ENCODE measurements at regions of chr3 and their contacts with region 1.

Region 1: GRCh38 chr3:123028233-123028828 is 768 bp upstream of the SEMA5B start:
- DNase-seq: peak; percentile 57 to 58
- H3K4me3 ChIP-seq: peak overlapping the region; percentile 29 to 47
- H3K27ac ChIP-seq: peak overlapping the region; percentile 36 to 60
- H3K4me1 ChIP-seq: peaks cover 0 to 15% of the 10 kb centered on the region in 2 donors
- H3K27me3 ChIP-seq: peaks cover 0 to 4% of the 10 kb centered on the region in 2 donors
- CTCF ChIP-seq: peak; percentile 51 to 64 (median 60)
- POLR2A ChIP-seq: no peak

Region 2: GRCh38 chr3:122784436-122784835 is 243.9 kb before region 1 on chr3:
- intact Hi-C with region 1: no loop called
- DNase-seq: no peak
- H3K4me3 ChIP-seq: no peak overlapping the region
- H3K27ac ChIP-seq: no peak overlapping the region
- H3K4me1 ChIP-seq: no peaks in the 10 kb centered on the region
- H3K27me3 ChIP-seq: no peaks in the 10 kb centered on the region
- CTCF ChIP-seq: no peak
- POLR2A ChIP-seq: no peak

Region 3: GRCh38 chr3:122942937-122943827 is 85.1 kb before region 1 on chr3:
- intact Hi-C with region 1: loop called (anchors 10 kb)
- DNase-seq: peak; percentile 43 to 49
- H3K4me3 ChIP-seq: no peak overlapping the region
- H3K27ac ChIP-seq: no peak overlapping the region
- H3K4me1 ChIP-seq: no peaks in the 10 kb centered on the region
- H3K27me3 ChIP-seq: no peaks in the 10 kb centered on the region
- CTCF ChIP-seq: peak; percentile 77 to 81 (median 78)
- POLR2A ChIP-seq: no peak

Region 4: DNA sequence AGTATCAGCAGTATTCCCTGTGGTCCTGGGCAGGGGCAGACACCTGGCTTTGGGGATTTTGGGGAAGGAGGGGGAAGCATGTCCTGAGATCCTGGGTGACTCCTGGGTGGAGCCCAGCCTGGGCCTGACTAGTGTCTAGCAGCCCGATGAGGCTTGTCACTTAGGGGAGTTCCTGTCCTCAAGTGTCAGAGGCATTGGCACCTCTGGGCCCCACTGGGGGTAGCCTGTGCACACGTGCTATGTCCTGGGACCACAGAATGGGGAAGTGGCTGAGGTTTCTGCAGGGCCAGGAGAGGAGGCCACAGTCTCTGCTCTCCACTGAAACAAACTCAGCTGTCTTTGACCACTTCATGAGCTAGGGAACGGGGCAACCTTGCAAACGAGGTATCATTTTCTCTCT is 452.1 kb after region 1 on chr3:
- intact Hi-C with region 1: no loop called
- DNase-seq: no peak
- H3K4me3 ChIP-seq: no peak overlapping the region
- H3K27ac ChIP-seq: no peak overlapping the region
- H3K4me1 ChIP-seq: no peaks in the 10 kb centered on the region
- H3K27me3 ChIP-seq: no peaks in the 10 kb centered on the region
- CTCF ChIP-seq: no peak
- POLR2A ChIP-seq: no peak

Measured in uterus (tissue), 4 donors.